ENCODE measurements at regions of chr1 and their contacts with region 1.

Region 1: GRCh38 chr1:16440470-16441281 is at the start of gene NECAP2:
- DNase-seq: peak; percentile 79 to 95 (median 88)
- ATAC-seq: peak; percentile 95
- H3K4me3 ChIP-seq: peak within 1 kb of the TSS; percentile 94
- H3K4me3 Mint-ChIP-seq: peak within 1 kb of the TSS; percentile 93 to 100 (median 97)
- H3K27ac ChIP-seq: peak within 1 kb of the TSS; percentile 100
- H3K27ac Mint-ChIP-seq: peak within 1 kb of the TSS; percentile 88 to 98 (median 96)
- H3K4me1 ChIP-seq: peaks cover 17 to 33% of the 10 kb centered on the region in 2 donors
- H3K4me1 Mint-ChIP-seq: peaks cover 19 to 45% (median 34%) of the 10 kb centered on the region in 7 donors
- H3K27me3 ChIP-seq: no peaks in the 10 kb centered on the region
- H3K27me3 Mint-ChIP-seq: no peaks in the 10 kb centered on the region
- total RNA-seq, gene NECAP2: 98.2 to 161 (median 148) TPM

Region 2: DNA sequence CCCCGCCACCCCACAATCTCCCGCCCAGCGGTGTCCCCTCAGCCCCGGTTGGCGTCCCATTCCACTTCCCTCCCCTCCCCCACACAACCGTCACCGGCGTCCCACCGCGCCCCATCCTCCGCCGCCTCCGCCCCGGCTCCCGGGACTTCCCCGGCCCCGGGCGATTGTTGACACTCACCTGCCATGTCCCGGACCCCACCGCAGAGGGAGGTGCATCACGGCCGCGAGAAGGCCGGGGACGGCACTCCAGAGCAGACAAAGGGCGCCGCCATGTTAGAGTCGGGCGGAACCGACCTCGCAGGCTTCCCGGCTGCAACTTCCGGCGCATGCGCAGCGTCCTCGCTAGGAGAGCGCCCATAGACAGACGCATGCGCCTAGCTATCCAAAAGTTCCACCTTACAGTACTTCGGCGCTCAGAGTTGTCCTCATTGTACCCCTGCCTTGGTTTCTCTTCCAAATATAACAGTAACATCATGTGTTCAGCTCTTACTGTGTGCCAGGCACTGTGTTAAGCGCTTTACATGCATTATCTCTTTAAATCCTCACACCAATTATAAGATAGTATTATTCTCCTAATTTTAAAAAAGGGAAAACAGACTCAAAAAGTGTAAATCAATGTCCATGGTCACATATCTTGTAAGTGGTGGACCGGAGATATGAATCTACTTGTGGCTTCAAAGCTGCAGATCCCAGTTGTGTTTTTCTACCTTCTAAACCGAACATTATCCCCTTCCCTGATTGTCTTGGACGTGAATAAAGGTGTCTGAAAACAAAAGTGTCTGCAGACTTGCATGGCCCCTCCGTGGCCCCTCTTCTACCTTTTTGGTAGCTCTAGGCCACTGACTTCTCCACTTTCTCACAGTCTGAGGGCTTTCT is 464.6 kb before region 1 on chr1 and contains the start of gene ZBTB17:
- CTCF ChIA-PET with region 1: no interaction called
- POLR2A ChIA-PET with region 1: no interaction called
- intact Hi-C with region 1: loop called in 1 of 2 experiments (anchors 5 kb)
- DNase-seq: peak; percentile 90 to 95 (median 94)
- ATAC-seq: peak; percentile 96
- H3K4me3 ChIP-seq: peak within 1 kb of the TSS; percentile 76
- H3K4me3 Mint-ChIP-seq: peak within 1 kb of the TSS; percentile 82 to 94 (median 90)
- H3K27ac ChIP-seq: peak within 1 kb of the TSS; percentile 83
- H3K27ac Mint-ChIP-seq: peak within 1 kb of the TSS; percentile 82 to 95 (median 92)
- H3K4me1 ChIP-seq: peaks cover 12 to 17% of the 10 kb centered on the region in 2 donors
- H3K4me1 Mint-ChIP-seq: peaks cover 21 to 46% (median 38%) of the 10 kb centered on the region in 7 donors
- H3K27me3 ChIP-seq: no peaks in the 10 kb centered on the region
- H3K27me3 Mint-ChIP-seq: no peaks in the 10 kb centered on the region
- total RNA-seq, gene ZBTB17: 47.3 to 85.1 (median 65.0) TPM

Region 3: DNA sequence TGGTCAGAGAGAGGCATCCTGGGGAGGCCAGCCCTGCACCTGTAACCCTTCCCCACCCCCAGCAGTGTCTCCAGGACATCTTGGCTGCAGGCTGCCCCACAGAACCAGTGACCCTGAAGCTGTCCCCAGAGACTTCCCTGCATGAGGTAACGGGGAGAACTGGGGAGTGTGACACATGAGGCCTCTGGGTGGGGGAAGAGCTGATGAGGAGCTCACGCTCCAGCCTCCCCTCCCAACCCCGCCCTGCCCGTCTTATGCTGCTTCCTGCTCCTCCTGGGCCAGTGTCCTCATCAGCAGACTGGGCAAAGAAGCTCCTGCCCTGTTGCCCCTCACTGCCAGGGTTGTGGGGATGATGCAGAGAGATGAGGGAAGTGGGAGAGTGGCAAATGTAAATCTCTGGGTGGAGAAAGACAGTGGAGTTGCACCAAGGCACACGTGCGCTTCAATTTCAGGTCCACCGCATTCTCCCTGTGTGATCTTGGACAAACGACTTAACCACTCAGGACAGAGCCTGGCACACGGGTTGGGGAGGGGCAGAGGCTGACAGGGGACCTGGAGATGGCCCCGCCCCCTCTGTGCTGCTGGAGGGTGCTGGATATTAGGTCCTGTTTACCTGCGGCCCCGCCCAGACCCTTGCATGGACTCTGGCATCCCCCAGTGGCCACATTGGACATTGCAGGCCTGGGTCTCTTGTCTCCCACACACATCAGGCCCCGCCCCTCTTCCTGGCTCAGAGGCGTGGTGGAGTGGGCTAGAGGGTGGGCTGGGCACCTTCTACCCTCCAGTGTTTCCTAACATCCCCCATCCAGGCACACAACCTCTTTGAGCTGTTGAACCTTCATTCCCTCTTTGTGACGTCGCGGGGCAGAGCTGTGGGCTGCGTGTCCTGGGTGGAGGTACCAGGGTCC is 384.8 kb before region 1 on chr1:
- CTCF ChIA-PET with region 1: no interaction called
- POLR2A ChIA-PET with region 1: no interaction called
- intact Hi-C with region 1: no loop called
- DNase-seq: peak; percentile 71 to 87 (median 78)
- ATAC-seq: peak; percentile 97
- H3K4me3 ChIP-seq: no peak overlapping the region
- H3K4me3 Mint-ChIP-seq: peak overlapping the region in 2 of 10 donors; percentile 17 to 43
- H3K27ac ChIP-seq: no peak overlapping the region
- H3K27ac Mint-ChIP-seq: peak overlapping the region in 4 of 9 donors; percentile 45 to 76 (median 68)
- H3K4me1 ChIP-seq: no peaks in the 10 kb centered on the region
- H3K4me1 Mint-ChIP-seq: peaks cover 5 to 6% (median 6%) of the 10 kb centered on the region in 7 donors
- H3K27me3 ChIP-seq: no peaks in the 10 kb centered on the region
- H3K27me3 Mint-ChIP-seq: peaks cover 0 to 4% (median 0%) of the 10 kb centered on the region in 5 donors

Region 4: DNA sequence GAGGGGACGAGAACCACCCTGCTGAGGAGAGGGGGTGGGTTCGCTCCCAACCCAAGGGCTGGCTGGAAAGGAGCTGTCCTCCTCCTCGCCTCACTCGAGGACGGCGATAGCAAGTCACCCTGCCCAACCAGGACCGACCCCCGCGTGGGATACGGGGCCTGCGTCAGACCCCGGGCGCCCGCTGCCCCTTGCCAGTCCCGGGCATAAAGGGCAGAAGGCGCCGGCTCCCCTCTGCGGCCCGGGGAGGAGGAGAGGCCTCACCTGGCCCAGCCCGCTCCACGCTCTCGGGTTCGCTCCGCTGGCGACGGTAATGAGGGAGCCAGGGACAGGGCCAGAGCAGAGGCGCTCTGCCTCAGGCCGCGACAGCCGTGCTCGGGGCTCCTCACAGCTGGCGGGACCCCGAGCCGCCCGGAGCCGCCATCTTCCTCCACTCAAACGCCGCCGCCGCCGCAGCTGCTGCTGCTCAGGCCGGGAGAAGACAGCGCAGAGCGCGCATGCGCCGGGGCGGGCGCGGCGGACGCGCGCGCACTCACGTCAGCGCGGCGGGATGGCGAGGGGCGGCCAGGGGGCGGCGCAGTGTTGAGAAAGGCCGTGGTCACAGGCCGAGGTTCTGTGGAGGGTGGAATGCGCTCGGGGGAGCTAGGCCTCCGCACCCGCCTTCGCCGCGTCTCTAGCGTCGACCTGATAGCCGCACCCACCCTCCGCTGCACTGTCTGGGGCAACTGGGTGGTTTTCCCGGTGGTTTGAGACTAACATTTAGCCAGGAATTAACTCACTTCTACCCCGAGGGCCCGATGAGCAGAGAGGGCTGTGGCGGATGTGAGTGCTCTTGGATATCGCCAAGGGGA is 88.5 kb before region 1 on chr1 and contains the start of gene FBXO42:
- CTCF ChIA-PET with region 1: interaction called, 3 read pairs
- POLR2A ChIA-PET with region 1: interaction called, 4 read pairs
- intact Hi-C with region 1: loop called in 1 of 2 experiments (anchors 1 kb)
- DNase-seq: peak; percentile 88 to 96 (median 94)
- ATAC-seq: peak; percentile 95
- H3K4me3 ChIP-seq: peak within 1 kb of the TSS; percentile 71
- H3K4me3 Mint-ChIP-seq: peak within 1 kb of the TSS; percentile 84 to 98 (median 94)
- H3K27ac ChIP-seq: peak within 1 kb of the TSS; percentile 97
- H3K27ac Mint-ChIP-seq: peak within 1 kb of the TSS; percentile 69 to 98 (median 94)
- H3K4me1 ChIP-seq: peaks cover 10 to 24% of the 10 kb centered on the region in 2 donors
- H3K4me1 Mint-ChIP-seq: peaks cover 17 to 44% (median 34%) of the 10 kb centered on the region in 7 donors
- H3K27me3 ChIP-seq: no peaks in the 10 kb centered on the region
- H3K27me3 Mint-ChIP-seq: no peaks in the 10 kb centered on the region
- total RNA-seq, gene FBXO42: 18.7 to 25.7 (median 24.6) TPM

Region 5: DNA sequence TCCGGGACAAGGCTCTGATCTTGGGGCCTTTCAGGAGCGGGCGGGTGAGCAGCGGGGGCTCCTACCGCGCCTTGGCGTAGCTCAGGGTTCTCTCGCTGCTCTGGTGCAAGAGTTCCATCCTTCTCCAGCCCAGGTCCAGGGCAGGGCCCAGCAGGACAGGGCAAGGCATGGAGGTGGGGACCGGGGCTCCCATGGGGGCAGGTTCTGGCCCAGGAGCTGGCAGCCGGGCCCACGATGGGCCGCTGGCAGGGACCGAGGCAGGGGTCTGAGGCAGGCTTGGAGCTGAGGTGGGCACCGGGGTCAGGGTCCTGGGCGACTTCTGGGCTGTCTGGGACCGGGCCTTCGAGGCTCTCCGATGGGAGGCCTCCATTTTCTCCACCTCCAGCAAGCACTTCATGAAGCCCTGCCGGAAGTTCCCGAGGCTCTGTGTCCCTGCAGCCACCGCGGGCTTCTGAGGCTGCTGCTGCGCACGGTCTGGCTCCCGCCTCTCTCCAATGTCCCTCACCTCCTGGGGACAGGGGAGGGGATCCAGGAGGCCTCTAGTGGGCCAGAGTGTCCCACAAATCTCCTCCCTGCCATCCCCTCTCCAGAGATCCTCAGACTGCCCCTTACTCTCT is 31.0 kb before region 1 on chr1:
- CTCF ChIA-PET with region 1: no interaction called
- POLR2A ChIA-PET with region 1: no interaction called
- intact Hi-C with region 1: no loop called
- DNase-seq: no peak
- ATAC-seq: no peak
- H3K4me3 ChIP-seq: no peak overlapping the region
- H3K4me3 Mint-ChIP-seq: no peak overlapping the region
- H3K27ac ChIP-seq: no peak overlapping the region
- H3K27ac Mint-ChIP-seq: no peak overlapping the region
- H3K4me1 ChIP-seq: no peaks in the 10 kb centered on the region
- H3K4me1 Mint-ChIP-seq: peaks cover 0 to 7% (median 0%) of the 10 kb centered on the region in 7 donors
- H3K27me3 ChIP-seq: no peaks in the 10 kb centered on the region
- H3K27me3 Mint-ChIP-seq: peaks cover 0 to 14% (median 0%) of the 10 kb centered on the region in 5 donors

Region 6: DNA sequence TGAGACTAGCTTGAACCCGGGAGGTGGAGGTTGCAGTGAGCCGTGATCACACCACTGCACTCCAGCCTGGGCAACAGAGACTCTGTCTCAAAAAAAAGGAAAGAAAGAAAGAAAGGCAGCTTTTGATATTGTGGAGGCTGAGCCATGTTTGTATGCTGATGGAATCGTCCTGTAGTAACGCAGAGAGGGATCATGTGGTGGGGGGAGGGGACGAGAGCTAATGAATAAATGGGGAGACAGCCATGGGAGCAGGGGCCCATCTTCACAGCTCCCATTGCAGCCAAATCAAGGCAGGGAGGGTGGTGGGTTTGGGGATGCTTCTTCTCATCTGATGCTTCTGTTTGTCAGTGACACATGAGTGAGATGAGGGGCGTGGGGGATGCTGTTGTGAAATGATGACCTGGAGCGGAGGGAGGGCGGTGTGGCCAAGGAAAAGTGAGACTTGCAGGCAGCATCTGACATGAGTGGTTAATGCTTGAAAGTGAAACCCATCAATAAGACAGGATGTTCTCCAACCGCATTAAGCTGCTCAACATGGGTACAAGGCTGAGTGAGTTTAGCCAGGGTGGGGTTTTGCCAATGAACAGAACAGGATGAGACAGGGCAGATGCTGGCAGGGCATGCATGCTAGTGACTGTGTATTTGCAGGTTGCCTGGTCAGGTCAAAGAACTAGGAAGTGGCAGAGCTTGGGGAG is 20.1 kb before region 1 on chr1:
- CTCF ChIA-PET with region 1: interaction called, 6 read pairs
- POLR2A ChIA-PET with region 1: interaction called, 21 read pairs
- intact Hi-C with region 1: loop called (anchors 1 kb)
- DNase-seq: peak in 8 of 9 donors; percentile 42 to 66 (median 58)
- ATAC-seq: peak; percentile 92
- H3K4me3 ChIP-seq: peak overlapping the region; percentile 36
- H3K4me3 Mint-ChIP-seq: peak overlapping the region; percentile 62 to 88 (median 75)
- H3K27ac ChIP-seq: peak overlapping the region; percentile 55
- H3K27ac Mint-ChIP-seq: peak overlapping the region; percentile 69 to 95 (median 84)
- H3K4me1 ChIP-seq: peaks cover 22 to 26% of the 10 kb centered on the region in 2 donors
- H3K4me1 Mint-ChIP-seq: peaks cover 23 to 38% (median 33%) of the 10 kb centered on the region in 7 donors
- H3K27me3 ChIP-seq: no peaks in the 10 kb centered on the region
- H3K27me3 Mint-ChIP-seq: no peaks in the 10 kb centered on the region

Region 7: DNA sequence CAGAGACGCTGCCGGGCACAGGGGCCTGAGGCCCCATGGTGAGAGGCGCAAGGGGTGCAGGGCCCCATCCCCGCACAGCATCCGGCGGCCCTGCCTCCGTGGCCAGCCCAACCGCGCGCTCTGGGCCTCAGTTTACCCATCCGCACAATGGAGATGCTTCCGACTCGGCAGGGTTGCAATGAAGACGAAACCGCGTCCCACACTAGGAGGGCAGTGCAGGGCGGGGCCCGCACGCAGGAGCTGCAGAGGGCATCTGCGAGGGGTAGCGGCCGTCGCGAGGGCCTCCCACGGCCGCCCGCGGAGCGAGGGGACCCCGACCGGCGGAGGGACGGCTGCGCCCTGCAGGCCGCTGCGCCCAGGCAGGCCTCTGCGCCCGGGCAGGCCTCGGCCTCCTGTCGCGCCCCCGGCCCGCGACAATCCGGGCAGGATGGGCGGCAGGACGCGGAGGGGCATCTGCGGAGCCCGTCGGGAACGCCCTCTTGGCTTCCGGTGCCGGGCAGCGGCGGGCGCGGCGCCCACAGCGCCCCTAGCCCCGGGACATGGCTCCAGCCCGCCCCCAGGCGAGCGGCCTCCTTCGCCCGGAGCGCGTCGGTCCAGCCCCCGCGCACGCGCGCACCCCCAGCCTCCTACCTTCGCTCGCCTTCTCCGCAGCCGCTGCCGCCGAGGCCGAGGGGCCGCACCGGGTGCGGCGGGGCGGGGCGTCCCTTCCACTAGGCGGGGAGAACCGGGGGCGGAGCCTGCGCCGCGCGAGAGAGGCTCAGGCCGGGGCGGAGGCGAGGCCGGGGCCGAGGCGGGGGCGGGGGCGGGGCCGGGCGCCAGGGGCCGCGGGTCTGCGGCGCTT is 58.1 kb after region 1 on chr1:
- CTCF ChIA-PET with region 1: interaction called, 9 read pairs
- POLR2A ChIA-PET with region 1: interaction called, 4 read pairs
- intact Hi-C with region 1: loop called (anchors 1 to 2 kb)
- DNase-seq: peak; percentile 64 to 91 (median 74)
- ATAC-seq: peak; percentile 94
- H3K4me3 ChIP-seq: peak overlapping the region; percentile 83
- H3K4me3 Mint-ChIP-seq: peak overlapping the region; percentile 83 to 95 (median 88)
- H3K27ac ChIP-seq: peak overlapping the region; percentile 56
- H3K27ac Mint-ChIP-seq: peak overlapping the region in 6 of 9 donors; percentile 38 to 85 (median 78)
- H3K4me1 ChIP-seq: no peaks in the 10 kb centered on the region
- H3K4me1 Mint-ChIP-seq: peaks cover 9 to 27% (median 20%) of the 10 kb centered on the region in 7 donors
- H3K27me3 ChIP-seq: no peaks in the 10 kb centered on the region
- H3K27me3 Mint-ChIP-seq: peaks cover 0 to 9% (median 0%) of the 10 kb centered on the region in 5 donors